ENCODE measurements at regions of chr19 and their contacts with region 1.

Region 1: DNA sequence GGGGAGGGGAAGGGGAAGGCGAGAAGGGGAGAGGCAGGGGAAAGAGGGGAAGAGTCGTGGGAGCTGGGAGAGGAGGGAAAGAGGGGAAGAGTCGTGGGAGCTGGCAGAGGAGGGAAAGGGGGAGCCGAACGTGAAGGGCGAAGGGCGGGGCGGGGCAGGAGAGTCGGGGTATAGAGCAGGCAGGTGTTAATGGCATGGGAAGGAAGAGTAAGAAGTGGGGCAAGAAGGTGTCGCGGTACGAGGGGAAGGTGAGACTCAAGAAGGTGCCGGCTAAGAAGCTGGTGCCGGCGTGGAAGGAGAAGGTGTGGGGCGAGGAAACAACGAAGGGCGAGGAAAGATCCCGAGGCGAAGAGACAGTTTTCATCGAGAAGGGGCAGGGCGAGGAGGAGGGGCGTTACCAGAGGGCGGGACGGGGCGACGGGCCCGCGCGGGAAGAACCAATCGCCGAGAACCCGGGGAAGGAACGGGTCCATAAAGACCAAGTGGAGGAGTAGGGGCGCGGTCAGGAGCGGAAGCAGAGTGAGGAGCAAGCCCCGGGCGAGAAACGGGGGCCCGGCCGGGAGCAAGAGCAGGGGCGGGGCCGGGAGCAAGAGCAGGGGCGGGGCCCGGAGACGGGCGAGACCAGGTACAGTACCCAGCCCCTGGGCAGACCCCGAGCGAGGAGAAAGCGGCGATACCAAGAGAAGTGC is 463 bp downstream of the CATSPERG start:
- DNase-seq: peak; percentile 94
- H3K4me3 Mint-ChIP-seq: peak overlapping the region; percentile 94
- H3K27ac Mint-ChIP-seq: peak overlapping the region; percentile 99
- H3K4me1 Mint-ChIP-seq: peaks cover 6% of the 10 kb centered on the region
- H3K27me3 Mint-ChIP-seq: no peaks in the 10 kb centered on the region

Region 2: GRCh38 chr19:37370880-37371661 is 965.0 kb before region 1 on chr19 and contains the start of gene ZNF527:
- intact Hi-C with region 1: loop called (anchors 5 kb)
- DNase-seq: peak; percentile 96
- H3K4me3 Mint-ChIP-seq: peak within 1 kb of the TSS; percentile 99
- H3K27ac Mint-ChIP-seq: peak within 1 kb of the TSS; percentile 87
- H3K4me1 Mint-ChIP-seq: peaks cover 13% of the 10 kb centered on the region
- H3K27me3 Mint-ChIP-seq: no peaks in the 10 kb centered on the region
- total RNA-seq, gene ZNF527: 3.9 and 4.5 TPM in 2 replicates

Region 3: GRCh38 chr19:37906869-37907734 is 429.0 kb before region 1 on chr19 and contains the start of gene SIPA1L3:
- intact Hi-C with region 1: loop called (anchors 1 kb)
- DNase-seq: peak; percentile 91
- H3K4me3 Mint-ChIP-seq: peak within 1 kb of the TSS; percentile 93
- H3K27ac Mint-ChIP-seq: peak within 1 kb of the TSS; percentile 68
- H3K4me1 Mint-ChIP-seq: peaks cover 17% of the 10 kb centered on the region
- H3K27me3 Mint-ChIP-seq: peaks cover 2% of the 10 kb centered on the region
- total RNA-seq, gene SIPA1L3: 16.7 and 18.4 TPM in 2 replicates

Region 4: GRCh38 chr19:38255383-38256014 is 80.6 kb before region 1 on chr19:
- intact Hi-C with region 1: loop called (anchors 1 kb)
- DNase-seq: no peak
- H3K4me3 Mint-ChIP-seq: peak overlapping the region; percentile 83
- H3K27ac Mint-ChIP-seq: peak overlapping the region; percentile 83
- H3K4me1 Mint-ChIP-seq: peaks cover 34% of the 10 kb centered on the region
- H3K27me3 Mint-ChIP-seq: peaks cover 8% of the 10 kb centered on the region

Region 5: DNA sequence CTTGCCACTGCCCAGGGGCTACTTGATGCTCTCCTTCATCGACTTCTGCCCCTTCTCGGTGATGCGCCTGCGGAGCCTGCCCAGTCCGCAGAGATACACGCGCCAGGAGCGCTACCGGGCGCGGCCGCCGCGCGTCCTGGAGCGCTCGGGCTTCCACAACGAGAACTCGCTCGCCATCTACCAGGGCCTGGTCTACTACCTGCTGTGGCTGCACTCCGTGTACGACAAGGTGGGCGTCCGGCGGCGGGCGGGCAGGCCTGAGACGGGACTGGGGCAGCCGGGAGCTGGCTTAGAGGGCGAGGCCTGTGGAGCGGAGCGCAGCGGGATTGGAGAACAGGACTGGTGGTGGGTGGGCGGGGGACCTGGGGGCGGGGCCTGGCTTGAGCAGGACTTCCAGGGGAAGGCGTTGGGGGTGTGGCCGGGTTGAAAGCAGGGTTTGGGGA is 25.6 kb after region 1 on chr19:
- intact Hi-C with region 1: loop called (anchors 1 kb)
- DNase-seq: peak; percentile 69
- H3K4me3 Mint-ChIP-seq: peak overlapping the region; percentile 90
- H3K27ac Mint-ChIP-seq: peak overlapping the region; percentile 61
- H3K4me1 Mint-ChIP-seq: peaks cover 22% of the 10 kb centered on the region
- H3K27me3 Mint-ChIP-seq: peaks cover 30% of the 10 kb centered on the region

Region 6: DNA sequence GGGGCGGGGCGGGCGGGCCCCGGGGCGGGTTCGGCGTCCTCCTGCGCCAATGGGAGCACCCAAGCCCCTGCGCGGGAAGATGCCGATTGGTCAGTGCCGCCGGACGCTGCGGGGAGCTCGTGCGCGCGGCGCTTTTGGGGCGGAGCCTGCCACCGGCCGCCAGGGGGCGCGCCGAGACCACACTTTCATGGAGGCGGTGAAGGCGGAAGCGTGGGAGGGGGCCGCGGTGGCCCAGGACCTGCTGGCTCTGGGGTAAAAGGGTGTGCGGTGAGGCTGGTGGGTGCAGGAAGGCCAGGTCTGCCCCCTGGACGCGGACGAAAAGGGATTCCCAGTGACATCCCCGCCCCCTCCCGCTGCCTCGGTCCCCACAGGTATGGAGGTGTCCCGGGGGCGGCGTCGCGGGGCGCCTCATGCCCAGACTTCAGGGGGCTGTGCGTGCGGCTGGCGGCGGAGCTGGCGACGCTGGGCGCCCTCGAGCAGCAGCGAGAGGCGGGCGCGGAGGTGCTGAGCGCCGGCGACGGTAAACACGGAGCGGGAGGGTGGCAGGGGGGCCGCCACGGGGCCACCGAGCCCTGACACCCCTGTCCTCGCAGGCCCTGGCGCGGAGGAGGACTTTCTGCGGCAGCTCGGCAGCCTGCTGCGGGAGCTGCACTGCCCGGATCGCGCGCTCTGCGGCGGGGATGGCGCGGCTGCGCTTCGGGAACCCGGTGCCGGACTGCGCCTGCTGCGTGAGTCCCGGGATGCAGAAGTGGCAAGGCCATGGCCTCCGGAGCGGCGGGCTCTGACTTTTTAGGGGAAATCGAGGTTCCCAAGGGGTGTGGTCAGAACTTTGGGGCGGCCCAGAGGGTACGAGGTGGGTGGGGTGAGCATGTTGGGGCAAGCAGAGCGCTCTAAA is 67.1 kb after region 1 on chr19 and contains the start of gene FAM98C:
- intact Hi-C with region 1: loop called (anchors 2 kb)
- DNase-seq: peak; percentile 98
- H3K4me3 Mint-ChIP-seq: peak within 1 kb of the TSS; percentile 89
- H3K27ac Mint-ChIP-seq: peak within 1 kb of the TSS; percentile 94
- H3K4me1 Mint-ChIP-seq: peaks cover 21% of the 10 kb centered on the region
- H3K27me3 Mint-ChIP-seq: no peaks in the 10 kb centered on the region
- total RNA-seq, gene FAM98C: 26.6 and 27.5 TPM in 2 replicates

Region 7: DNA sequence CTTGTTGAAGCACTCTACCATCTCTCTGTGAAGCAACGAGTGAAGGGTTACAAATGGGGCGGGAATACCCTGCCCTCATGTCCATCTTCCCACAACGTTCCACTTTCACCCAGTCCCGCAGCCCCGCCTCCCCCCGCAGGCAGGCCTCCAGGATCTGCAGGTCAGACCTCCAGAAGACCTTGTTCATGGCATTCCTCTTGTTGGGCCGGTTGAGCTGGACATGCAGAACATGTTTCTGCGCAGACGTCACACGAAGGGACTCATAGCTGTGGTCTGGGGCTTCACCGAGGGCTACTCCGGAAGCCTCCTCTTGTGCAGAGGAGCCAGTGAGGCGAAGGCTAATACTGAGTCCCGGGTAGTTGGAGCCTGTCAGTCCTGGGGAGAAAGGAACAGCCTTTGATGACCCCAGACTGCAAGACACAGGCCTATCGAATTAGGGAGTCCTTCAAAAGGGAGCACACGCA is 495.1 kb after region 1 on chr19:
- intact Hi-C with region 1: loop called (anchors 1 kb)
- DNase-seq: no peak
- H3K4me3 Mint-ChIP-seq: peak overlapping the region; percentile 89
- H3K27ac Mint-ChIP-seq: peak overlapping the region; percentile 95
- H3K4me1 Mint-ChIP-seq: peaks cover 22% of the 10 kb centered on the region
- H3K27me3 Mint-ChIP-seq: no peaks in the 10 kb centered on the region

Measured in activated T-helper 1 cell treated with anti-CD3 and anti-CD28 coated beads, Interleukin-12 subunit alpha, Interleukin-12 subunit beta, Interleukin-2, Interleukin-4 antibody, amounts not matched to agents 30 ng/mL and 10 ng/mL and 1 ng/mL, durations not matched to agents 14 hours and 24 hours and 36 hours (primary cell).